Mammary epithelial cell (primary cell): ENCODE measurements at regions of chr10 and their contacts with region 1.

Region 1: GRCh38 chr10:43683451-43684291 is 35.0 kb upstream of the ZNF32 start:
- DNase-seq: no peak
- H3K4me3 ChIP-seq: no peak overlapping the region
- H3K27ac ChIP-seq: no peak overlapping the region
- H3K4me1 ChIP-seq: no peaks in the 10 kb centered on the region
- H3K27me3 ChIP-seq: no peaks in the 10 kb centered on the region
- CTCF ChIP-seq: peak; percentile 13 to 45

Region 2: DNA sequence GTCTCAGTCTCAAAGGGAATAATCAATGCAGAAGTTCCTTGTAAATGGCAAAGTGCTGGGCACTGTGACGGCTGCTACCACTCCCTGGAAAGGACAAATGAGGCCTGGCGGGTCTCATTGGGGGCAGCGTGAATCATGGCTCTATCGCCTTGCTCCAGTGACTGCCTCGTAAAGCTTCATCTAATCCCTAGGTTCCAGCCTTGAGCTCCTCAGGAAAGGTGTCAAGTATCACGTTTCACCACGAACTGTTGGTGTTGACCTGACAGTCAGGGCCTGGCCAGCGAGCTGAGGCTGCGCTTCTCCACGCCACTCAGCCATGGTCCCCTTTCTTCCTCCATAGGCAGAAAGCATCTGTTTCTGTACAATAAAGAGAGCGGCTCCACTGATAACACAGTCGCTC is 91.7 kb after region 1 on chr10:
- CTCF ChIA-PET with region 1: no interaction called
- dilution Hi-C with region 1: loop called (anchors 5 kb)
- in situ Hi-C with region 1: no loop called
- intact Hi-C with region 1: no loop called
- DNase-seq: no peak
- H3K4me3 ChIP-seq: no peak overlapping the region
- H3K27ac ChIP-seq: no peak overlapping the region
- H3K4me1 ChIP-seq: no peaks in the 10 kb centered on the region
- H3K27me3 ChIP-seq: no peaks in the 10 kb centered on the region
- CTCF ChIP-seq: no peak